SK-N-SH (cell line): ENCODE measurements at regions of chr20 and their contacts with region 1.

Region 1: GRCh38 chr20:64062596-64063388 is at the start of gene TCEA2:
- DNase-seq: peak; percentile 99
- H3K4me3 ChIP-seq: peak within 1 kb of the TSS; percentile 91 to 93
- H3K27ac ChIP-seq: peak within 1 kb of the TSS; percentile 64 to 83
- H3K4me1 ChIP-seq: peaks cover 14 to 17% of the 10 kb centered on the region in 2 experiments; a peak in 2 of 4 replicates
- H3K27me3 ChIP-seq: no peaks in the 10 kb centered on the region
- CTCF ChIP-seq: no peak
- EP300 ChIP-seq: no peak; a peak in 1 of 4 replicates
- RAD21 ChIP-seq: no peak
- polyA plus RNA-seq, gene TCEA2: 53.5 and 98.9 TPM in 2 replicates

Region 2: GRCh38 chr20:63980806-63981728 is 81.7 kb before region 1 on chr20 and contains the start of gene PRPF6:
- CTCF ChIA-PET with region 1: interaction called, 24 read pairs
- POLR2A ChIA-PET with region 1: interaction called, 4 read pairs
- DNase-seq: peak; percentile 98
- H3K4me3 ChIP-seq: peak within 1 kb of the TSS; percentile 77 to 98
- H3K27ac ChIP-seq: peak within 1 kb of the TSS; percentile 89 to 90
- H3K4me1 ChIP-seq: peaks cover 12 to 24% of the 10 kb centered on the region in 2 experiments
- H3K27me3 ChIP-seq: no peaks in the 10 kb centered on the region
- CTCF ChIP-seq: peak; percentile 81
- EP300 ChIP-seq: 0 out of 4 replicates have a peak, but pooled peaks of 1 of the 2 experiments have one; percentile 8
- RAD21 ChIP-seq: no peak; the same call in 1 of the 2 replicates
- polyA plus RNA-seq, gene PRPF6: 50.1 and 59.1 TPM in 2 replicates

Region 3: DNA sequence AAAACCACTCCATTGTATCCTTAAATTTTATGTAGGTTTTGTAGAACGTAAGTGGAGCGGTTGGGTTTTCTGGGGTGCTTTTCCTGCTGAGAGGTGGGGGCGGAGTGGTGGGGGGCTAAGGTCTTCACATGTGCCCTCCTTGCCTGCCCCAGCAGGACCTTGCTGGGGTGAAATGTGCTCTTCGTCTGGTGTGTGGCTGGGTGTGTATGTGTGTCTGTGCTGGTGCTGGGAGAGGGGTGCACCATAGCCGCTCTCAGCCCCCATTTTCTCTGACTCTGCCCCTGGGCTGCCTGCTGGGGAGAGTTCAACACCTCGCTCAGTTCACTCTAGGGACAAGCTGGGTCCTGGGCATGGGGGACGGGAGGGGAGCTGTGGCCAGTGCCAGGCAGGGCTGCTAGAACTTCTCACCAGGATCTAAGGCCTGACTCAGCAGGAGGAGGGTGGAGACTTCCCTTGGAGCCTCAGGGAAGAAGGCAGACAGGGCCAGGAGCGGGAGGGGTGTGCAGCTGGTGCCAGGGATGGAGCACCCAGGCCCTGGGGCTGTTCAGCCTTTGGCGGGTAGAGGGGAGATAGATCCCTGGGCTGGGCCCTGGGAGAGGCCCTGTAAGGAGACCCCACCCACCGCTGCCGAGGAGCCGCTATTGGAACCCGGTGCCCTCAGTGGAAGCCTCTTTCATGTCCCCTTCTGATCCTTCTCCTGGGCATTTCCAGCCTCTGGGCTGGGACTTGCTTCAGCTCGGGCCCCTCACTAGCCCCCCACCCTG is 18.1 kb before region 1 on chr20:
- CTCF ChIA-PET with region 1: interaction called, 61 read pairs
- POLR2A ChIA-PET with region 1: interaction called, 4 read pairs
- DNase-seq: no peak
- H3K4me3 ChIP-seq: no peak overlapping the region
- H3K27ac ChIP-seq: no peak overlapping the region
- H3K4me1 ChIP-seq: peaks cover 0 to 7% of the 10 kb centered on the region in 2 experiments; a peak in 1 of 4 replicates
- H3K27me3 ChIP-seq: peaks cover 26% of the 10 kb centered on the region
- CTCF ChIP-seq: no peak
- EP300 ChIP-seq: no peak
- RAD21 ChIP-seq: no peak

Region 4: GRCh38 chr20:64079273-64080012 is 16.7 kb after region 1 on chr20 and contains the start of gene RGS19:
- CTCF ChIA-PET with region 1: interaction called, 21 read pairs
- POLR2A ChIA-PET with region 1: interaction called, 4 read pairs
- DNase-seq: peak; percentile 96
- H3K4me3 ChIP-seq: peak within 1 kb of the TSS; percentile 76 to 80
- H3K27ac ChIP-seq: peak within 1 kb of the TSS in 1 of 2 experiments; percentile 68; a peak in 2 of 4 replicates
- H3K4me1 ChIP-seq: peaks cover 13 to 34% of the 10 kb centered on the region in 2 experiments; a peak in 3 of 4 replicates
- H3K27me3 ChIP-seq: no peaks in the 10 kb centered on the region
- CTCF ChIP-seq: no peak
- EP300 ChIP-seq: no peak
- RAD21 ChIP-seq: no peak
- polyA plus RNA-seq, gene RGS19: 18.7 and 20.5 TPM in 2 replicates